ENCODE measurements at regions of chr1 and their contacts with region 1.

Region 1: GRCh38 chr1:46223472-46223943 is 20.4 kb downstream of the LURAP1 start:
- DNase-seq: peak; percentile 46 to 58
- H3K4me3 ChIP-seq: no peak overlapping the region
- H3K4me3 Mint-ChIP-seq: no peak overlapping the region
- H3K27ac Mint-ChIP-seq: no peak overlapping the region
- H3K4me1 ChIP-seq: no peaks in the 10 kb centered on the region; the same call in 1 of the 2 replicates
- H3K4me1 Mint-ChIP-seq: no peaks in the 10 kb centered on the region
- H3K27me3 ChIP-seq: no peaks in the 10 kb centered on the region
- H3K27me3 Mint-ChIP-seq: no peaks in the 10 kb centered on the region
- CTCF ChIP-seq: peak; percentile 74 to 88

Region 2: GRCh38 chr1:46036894-46037839 is 186.3 kb before region 1 on chr1:
- CTCF ChIA-PET with region 1: interaction called, 6 read pairs
- POLR2A ChIA-PET with region 1: no interaction called
- intact Hi-C with region 1: loop called (anchors 1 kb)
- DNase-seq: peak; percentile 74 to 80
- H3K4me3 ChIP-seq: no peak overlapping the region
- H3K4me3 Mint-ChIP-seq: no peak overlapping the region
- H3K27ac Mint-ChIP-seq: no peak overlapping the region
- H3K4me1 ChIP-seq: no peaks in the 10 kb centered on the region
- H3K4me1 Mint-ChIP-seq: no peaks in the 10 kb centered on the region
- H3K27me3 ChIP-seq: no peaks in the 10 kb centered on the region
- H3K27me3 Mint-ChIP-seq: no peaks in the 10 kb centered on the region
- CTCF ChIP-seq: peak; percentile 77 to 90

Region 3: DNA sequence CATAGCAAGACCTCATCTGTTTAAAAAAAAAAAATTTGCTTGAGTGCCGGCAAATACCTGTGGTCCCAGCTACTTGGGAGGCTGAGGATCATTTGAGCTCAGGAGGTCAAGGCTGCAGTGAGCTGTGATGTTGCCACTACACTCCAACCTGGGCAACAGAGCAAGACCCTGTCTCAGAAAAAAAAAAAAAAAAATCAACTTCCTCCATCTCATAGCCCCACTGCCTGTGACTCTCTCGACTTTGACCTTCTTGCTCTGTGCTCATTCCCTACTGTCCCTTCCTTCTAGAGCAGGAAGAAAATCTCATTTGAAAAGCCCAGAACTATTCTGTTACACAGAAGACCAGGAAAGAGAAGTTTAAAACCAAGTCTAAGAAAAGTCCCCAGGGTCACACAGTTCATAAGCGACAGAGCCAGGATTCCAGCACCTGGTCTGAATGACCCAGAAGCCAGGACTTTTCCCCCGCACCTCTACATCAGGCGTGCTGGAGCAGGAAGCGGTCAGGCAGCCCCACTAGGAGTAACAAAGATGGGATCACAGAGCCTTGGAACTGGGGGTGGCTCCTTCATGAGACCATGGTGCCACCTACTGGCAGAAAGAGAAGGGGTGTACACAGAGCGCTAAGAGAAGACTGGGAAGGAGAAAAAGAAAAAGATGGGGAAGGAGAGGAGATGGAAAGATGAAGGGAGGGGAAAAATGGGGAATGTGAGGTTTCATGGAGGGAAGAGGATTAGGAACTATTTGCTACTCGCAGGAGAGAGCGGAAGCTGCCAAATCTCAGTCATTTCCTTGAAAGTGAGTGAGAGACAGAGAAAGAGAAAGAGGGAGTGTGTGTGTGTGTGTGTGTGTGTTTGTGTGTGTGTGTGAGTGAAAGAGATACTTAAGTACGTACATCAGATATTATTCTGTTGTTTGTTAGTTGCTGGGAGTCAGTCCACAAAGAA is 44.1 kb before region 1 on chr1:
- CTCF ChIA-PET with region 1: interaction called, 8 read pairs
- POLR2A ChIA-PET with region 1: no interaction called
- intact Hi-C with region 1: loop called (anchors 1 kb)
- DNase-seq: peak; percentile 79 to 81
- H3K4me3 ChIP-seq: no peak overlapping the region
- H3K4me3 Mint-ChIP-seq: no peak overlapping the region
- H3K27ac Mint-ChIP-seq: no peak overlapping the region
- H3K4me1 ChIP-seq: peaks cover 10% of the 10 kb centered on the region
- H3K4me1 Mint-ChIP-seq: no peaks in the 10 kb centered on the region
- H3K27me3 ChIP-seq: no peaks in the 10 kb centered on the region
- H3K27me3 Mint-ChIP-seq: no peaks in the 10 kb centered on the region
- CTCF ChIP-seq: peak; percentile 84 to 89

Region 4: GRCh38 chr1:46247436-46248121 is 24.1 kb after region 1 on chr1 and contains the start of gene RAD54L:
- CTCF ChIA-PET with region 1: interaction called, 18 read pairs
- POLR2A ChIA-PET with region 1: interaction called, 8 read pairs
- intact Hi-C with region 1: loop called (anchors 1 kb)
- DNase-seq: peak; percentile 96 to 99
- H3K4me3 ChIP-seq: peak within 1 kb of the TSS; percentile 64
- H3K4me3 Mint-ChIP-seq: peak within 1 kb of the TSS; percentile 96
- H3K27ac Mint-ChIP-seq: peak within 1 kb of the TSS; percentile 98
- H3K4me1 ChIP-seq: no peaks in the 10 kb centered on the region
- H3K4me1 Mint-ChIP-seq: peaks cover 6% of the 10 kb centered on the region
- H3K27me3 ChIP-seq: no peaks in the 10 kb centered on the region
- H3K27me3 Mint-ChIP-seq: no peaks in the 10 kb centered on the region
- CTCF ChIP-seq: no peak
- total RNA-seq, gene RAD54L: 29.1 and 30.6 TPM in 2 replicates

Region 5: GRCh38 chr1:46278807-46279206 is 55.3 kb after region 1 on chr1:
- CTCF ChIA-PET with region 1: no interaction called
- POLR2A ChIA-PET with region 1: no interaction called
- intact Hi-C with region 1: no loop called
- DNase-seq: no peak
- H3K4me3 ChIP-seq: no peak overlapping the region
- H3K4me3 Mint-ChIP-seq: no peak overlapping the region
- H3K27ac Mint-ChIP-seq: no peak overlapping the region
- H3K4me1 ChIP-seq: no peaks in the 10 kb centered on the region
- H3K4me1 Mint-ChIP-seq: peaks cover 11% of the 10 kb centered on the region
- H3K27me3 ChIP-seq: no peaks in the 10 kb centered on the region
- H3K27me3 Mint-ChIP-seq: no peaks in the 10 kb centered on the region
- CTCF ChIP-seq: no peak

Measured in Caco-2 (cell line).